ENCODE measurements at regions of chr14 and their contacts with region 1.

Region 1: DNA sequence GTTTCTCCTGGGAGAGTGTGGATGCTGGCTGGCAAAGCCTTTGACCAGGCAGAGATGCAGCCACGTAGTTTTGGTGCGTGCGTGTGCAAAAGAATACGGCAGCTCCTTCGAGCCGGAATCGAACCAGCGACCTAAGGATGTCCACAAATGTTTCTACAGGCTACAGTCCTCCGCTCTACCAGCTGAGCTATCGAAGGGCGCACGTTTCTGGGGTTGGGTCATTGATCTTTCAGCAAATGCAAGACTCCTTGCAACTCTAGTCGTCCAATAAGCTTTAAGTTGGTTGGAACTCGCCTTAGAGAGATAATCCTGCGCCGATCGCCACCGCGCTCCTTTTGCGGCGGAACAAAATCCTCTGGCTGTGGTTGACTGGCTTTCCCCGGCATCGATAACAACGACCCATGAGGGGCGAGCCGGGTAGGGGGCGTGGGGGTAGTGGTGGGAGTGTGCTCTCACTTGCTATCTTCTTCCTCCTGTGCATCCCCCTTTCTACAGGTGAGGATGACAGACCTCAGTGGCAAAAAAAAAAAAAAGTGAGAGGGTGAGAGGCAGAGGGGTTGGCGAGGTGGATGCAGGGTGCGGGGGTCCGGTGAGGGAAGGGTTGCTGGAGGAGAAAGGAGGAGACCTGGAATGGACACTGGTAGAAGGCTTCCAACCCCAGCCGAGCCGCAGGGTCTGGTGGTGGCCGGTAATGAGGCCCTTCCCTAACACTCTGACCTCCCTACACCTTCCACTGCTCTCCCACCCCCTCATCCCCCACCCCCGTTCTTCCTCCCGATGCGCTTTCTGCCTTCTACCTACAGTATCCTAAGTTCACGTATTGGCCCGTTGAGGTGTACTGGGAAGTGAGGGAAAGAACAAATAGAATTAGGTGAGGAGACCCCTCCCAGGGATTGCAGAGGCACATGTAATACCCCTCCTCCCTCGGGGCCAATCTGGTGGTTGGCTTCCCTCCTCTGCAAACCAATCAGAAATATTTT is 11.8 kb upstream of the OR6S1 start:
- DNase-seq: peak; percentile 53
- H3K4me3 Mint-ChIP-seq: peak overlapping the region; percentile 63
- H3K27ac Mint-ChIP-seq: no peak overlapping the region
- H3K4me1 Mint-ChIP-seq: peaks cover 24% of the 10 kb centered on the region
- H3K27me3 Mint-ChIP-seq: peaks cover 57% of the 10 kb centered on the region

Region 2: DNA sequence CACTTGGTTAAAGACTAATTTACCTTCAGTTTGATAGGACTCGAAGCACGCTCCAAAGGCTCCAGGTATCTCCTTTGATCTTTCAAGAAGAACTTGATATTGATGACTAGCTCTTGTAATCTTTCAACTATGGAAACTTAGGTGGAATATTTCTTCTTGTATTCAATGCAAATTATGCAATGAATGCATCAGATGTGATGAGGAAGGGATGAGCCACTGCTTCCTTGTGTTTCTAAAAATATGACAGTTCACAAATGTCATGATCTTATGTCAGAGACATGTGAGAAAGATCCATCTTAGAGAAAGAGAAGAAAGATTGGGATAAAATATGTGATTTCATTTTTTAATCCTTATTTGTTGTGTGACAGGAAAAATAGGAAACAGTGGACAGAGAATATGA is 102.4 kb before region 1 on chr14:
- intact Hi-C with region 1: no loop called
- DNase-seq: no peak
- H3K4me3 Mint-ChIP-seq: no peak overlapping the region
- H3K27ac Mint-ChIP-seq: no peak overlapping the region
- H3K4me1 Mint-ChIP-seq: no peaks in the 10 kb centered on the region
- H3K27me3 Mint-ChIP-seq: no peaks in the 10 kb centered on the region

Region 3: DNA sequence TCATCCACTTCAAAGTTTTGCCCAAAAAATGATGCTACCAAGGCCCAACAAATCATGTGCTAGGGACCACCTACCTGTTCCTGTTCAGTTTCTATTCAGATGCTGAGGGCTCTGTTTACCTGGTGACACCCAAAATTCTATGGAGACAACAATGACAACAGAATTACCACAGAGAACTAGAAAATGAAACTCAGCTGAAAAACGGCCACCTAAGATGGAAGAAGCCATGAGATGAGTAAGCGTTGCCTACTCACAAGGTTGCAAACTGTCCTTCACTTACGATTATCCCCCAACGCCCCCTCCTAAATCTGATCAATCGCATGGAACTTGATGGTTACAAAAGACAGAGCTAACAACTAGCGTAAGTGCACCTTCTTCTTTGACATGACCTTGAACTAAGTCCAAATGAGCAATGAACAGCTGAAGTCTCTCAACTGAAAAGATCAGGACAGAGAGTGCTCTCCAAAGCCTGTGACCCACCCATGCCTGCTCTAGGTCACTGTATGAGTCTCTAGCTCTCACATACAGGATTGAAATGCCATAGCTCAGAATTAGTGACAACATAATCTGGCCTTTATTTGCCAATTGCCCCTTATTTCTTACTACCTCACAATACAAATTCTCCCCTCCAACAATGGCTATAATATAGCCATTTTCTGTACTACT is 65.7 kb before region 1 on chr14 and contains the start of gene RNASE11:
- intact Hi-C with region 1: no loop called
- DNase-seq: no peak
- H3K4me3 Mint-ChIP-seq: no peak within 1 kb of the TSS
- H3K27ac Mint-ChIP-seq: no peak within 1 kb of the TSS
- H3K4me1 Mint-ChIP-seq: peaks cover 10% of the 10 kb centered on the region
- H3K27me3 Mint-ChIP-seq: peaks cover 30% of the 10 kb centered on the region
- total RNA-seq, gene RNASE11: not detected in 2 replicates

Region 4: DNA sequence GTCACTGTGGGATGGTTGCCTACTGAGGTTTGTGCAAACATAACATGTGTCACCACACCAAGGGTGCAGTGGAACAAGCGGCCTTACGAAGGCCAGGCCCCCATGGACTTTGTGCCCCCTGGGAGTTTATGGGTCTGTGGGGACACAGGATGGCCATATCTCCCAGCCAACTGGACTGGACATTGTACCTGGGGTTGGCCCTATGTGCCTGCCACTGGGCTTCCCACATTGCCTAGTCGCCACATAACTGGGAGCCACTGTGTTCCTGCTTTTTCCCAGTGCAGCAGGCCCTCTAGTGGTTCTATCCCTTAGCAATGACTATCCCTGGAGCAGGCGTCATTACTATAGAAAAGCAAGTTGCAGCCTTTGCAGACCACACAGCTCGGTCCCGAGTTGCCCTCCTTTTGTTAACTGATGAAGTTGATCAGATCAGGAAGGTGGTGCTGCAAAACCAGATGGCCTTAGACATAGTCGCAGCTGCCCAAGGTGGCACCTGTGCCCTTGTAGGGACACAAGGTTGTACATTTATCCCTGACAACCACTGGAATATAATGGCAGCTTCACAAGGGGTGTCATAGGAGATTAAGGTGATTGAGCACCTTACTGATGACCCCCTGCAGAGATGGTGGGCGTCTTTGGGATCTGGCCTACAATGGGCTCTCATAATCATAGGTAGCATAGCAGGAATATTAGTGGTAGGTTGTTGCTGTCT is 46.9 kb before region 1 on chr14:
- intact Hi-C with region 1: no loop called
- DNase-seq: no peak
- H3K4me3 Mint-ChIP-seq: no peak overlapping the region
- H3K27ac Mint-ChIP-seq: no peak overlapping the region
- H3K4me1 Mint-ChIP-seq: peaks cover 4% of the 10 kb centered on the region
- H3K27me3 Mint-ChIP-seq: no peaks in the 10 kb centered on the region

Region 5: DNA sequence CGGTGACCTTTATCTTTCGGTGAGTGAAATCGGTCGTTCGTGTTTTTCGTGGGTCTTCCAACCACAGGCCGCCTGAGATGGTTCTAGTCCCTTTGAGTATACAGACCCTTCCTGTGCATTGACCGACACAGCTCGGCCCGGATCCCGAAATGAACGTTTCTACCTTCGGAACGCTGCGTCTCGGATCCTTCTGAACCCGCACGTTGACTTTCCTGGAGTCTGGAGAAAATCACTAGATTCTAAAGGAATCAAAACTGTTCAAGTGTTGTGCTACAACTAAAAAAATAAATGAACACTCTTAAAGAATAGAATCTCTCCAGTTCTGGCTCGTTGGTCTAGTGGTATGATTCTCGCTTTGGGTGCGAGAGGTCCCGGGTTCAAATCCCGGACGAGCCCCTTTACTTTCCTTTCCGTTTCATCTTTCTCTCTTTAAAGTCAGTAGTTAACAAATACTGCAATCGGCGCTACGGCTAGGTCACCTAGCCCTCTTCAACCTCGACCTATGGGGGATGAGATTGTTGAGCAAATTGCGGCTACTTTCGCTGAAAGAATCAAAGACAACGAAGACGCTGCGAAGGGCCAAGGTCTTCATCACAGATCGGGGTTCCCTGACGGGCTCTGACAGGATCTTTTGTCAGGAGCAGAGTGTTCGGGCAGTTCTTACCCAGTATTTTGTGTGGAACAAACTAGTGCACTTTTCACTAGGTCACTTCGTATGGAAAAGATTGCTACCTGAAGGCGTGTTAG is 20.4 kb before region 1 on chr14:
- intact Hi-C with region 1: loop called (anchors 2 kb)
- DNase-seq: peak; percentile 63
- H3K4me3 Mint-ChIP-seq: peak overlapping the region; percentile 75
- H3K27ac Mint-ChIP-seq: peak overlapping the region; percentile 72
- H3K4me1 Mint-ChIP-seq: peaks cover 35% of the 10 kb centered on the region
- H3K27me3 Mint-ChIP-seq: peaks cover 63% of the 10 kb centered on the region

Region 6: GRCh38 chr14:21287168-21287567 is 633.9 kb after region 1 on chr14:
- intact Hi-C with region 1: no loop called
- DNase-seq: no peak
- H3K4me3 Mint-ChIP-seq: no peak overlapping the region
- H3K27ac Mint-ChIP-seq: no peak overlapping the region
- H3K4me1 Mint-ChIP-seq: no peaks in the 10 kb centered on the region
- H3K27me3 Mint-ChIP-seq: peaks cover 7% of the 10 kb centered on the region

Measured in activated T-helper 2 cell treated with anti-CD3 and anti-CD28 coated beads, Interferon-gamma antibody, Interleukin-2, Interleukin-4, amounts not matched to agents 10 μg/mL and 5 μg/mL and 100 μg/mL, durations not matched to agents 14 hours and 24 hours and 36 hours (primary cell).